ENCODE measurements at regions of chr15 and their contacts with region 1.

Region 1: DNA sequence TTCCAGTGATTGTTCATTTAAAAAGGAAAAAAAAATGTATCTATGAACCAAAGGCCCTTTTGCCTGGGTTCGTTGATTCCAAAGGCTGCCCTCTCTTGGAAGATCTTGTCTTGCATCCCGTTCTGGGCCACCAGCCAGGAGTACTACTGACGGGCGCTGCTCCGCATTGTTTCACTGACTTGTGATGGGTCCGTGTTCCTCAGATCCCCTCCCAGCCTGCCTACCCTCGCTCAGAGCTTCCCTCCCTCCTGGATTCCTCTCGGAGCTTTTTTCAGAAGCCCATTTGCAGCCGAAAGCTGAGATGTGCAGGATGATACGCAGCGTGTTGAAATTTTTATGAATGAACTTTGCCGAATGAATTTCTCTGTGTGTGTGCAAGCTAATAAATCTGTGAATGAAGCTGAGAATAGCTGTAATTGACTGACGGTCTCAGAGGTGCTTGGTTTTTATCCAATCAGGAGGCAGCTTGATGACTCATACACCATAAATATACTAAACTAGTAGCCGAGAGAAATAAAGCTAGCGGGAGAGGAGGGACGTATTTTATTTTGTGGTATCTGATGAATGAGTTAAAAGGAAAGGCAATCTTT is at the start of gene SHC4:
- DNase-seq: peak; percentile 29
- ATAC-seq: peak; percentile 45
- H3K4me3 Mint-ChIP-seq: peak within 1 kb of the TSS; percentile 69
- H3K27ac Mint-ChIP-seq: peak within 1 kb of the TSS; percentile 84
- H3K4me1 Mint-ChIP-seq: peaks cover 34% of the 10 kb centered on the region
- H3K27me3 Mint-ChIP-seq: peaks cover 38% of the 10 kb centered on the region
- total RNA-seq, gene SHC4: 1.4 TPM

Region 2: DNA sequence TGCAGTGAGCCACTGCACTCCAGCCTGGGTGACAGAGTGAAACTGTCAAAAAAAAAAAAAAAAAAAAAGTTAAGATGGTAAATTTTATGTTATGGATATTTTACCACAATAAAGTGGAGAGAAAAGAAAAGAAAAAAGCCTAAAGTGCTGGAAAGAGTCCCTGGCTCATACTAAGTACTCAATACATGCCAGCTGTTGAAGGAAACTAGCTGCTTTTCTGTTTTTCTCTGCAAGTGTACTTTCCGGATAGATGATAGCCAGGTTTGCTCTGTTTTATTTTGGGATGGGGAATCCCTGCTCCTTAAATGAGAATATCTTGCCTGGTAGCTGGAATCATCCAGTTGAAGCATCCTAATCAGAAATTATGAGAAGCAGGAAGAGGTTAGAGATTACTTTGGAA is 74.8 kb before region 1 on chr15:
- CTCF ChIA-PET with region 1: no interaction called
- POLR2A ChIA-PET with region 1: no interaction called
- intact Hi-C with region 1: loop called in 1 of 2 experiments (anchors 2 kb)
- DNase-seq: no peak
- ATAC-seq: no peak
- H3K4me3 Mint-ChIP-seq: no peak overlapping the region
- H3K27ac Mint-ChIP-seq: no peak overlapping the region
- H3K4me1 Mint-ChIP-seq: peaks cover 11% of the 10 kb centered on the region
- H3K27me3 Mint-ChIP-seq: peaks cover 13% of the 10 kb centered on the region